ENCODE measurements at regions of chr17 and their contacts with region 1.

Region 1: DNA sequence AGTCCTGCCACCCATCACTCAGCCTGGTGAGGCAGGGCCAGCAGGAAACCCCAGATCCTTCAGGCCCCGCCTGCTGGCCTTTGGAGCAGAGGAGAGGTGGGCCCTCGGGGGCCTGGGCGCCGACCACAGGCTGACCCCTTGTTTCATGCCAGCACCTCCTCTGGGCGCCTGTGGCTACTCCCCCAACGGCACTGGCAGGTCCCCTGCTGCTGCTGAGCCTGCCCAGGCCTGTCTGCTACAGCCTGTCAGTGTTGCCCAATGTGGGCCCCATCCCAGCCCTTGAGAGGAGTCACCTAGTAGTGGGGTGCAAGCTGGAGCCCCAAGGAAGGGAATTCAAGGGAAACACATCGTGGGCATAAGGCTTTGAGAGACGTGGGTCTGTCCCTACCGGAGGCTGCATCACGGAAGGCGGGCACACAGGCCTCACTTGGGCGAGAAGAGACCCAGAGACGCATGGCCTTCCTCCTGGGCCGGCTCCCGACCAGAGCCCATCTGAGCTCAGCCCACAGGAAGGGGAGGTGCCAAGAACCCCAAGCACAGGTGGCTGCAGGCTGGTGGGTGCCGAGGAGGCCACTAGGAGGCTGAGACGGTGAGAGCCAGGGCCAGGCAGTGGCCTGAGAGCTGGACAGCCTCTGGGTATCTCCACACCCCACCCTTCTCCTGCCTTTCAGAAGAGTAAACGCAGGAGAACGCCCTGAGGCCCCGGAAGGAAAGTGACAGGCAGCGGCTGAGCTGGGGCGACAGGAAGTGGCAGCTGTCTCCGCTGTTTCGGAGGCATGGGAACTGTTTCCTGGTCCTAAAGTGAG is 8.0 kb upstream of the FASN start:
- DNase-seq: peak; percentile 54
- H3K4me3 Mint-ChIP-seq: peak overlapping the region; percentile 88
- H3K27ac Mint-ChIP-seq: peak overlapping the region; percentile 96
- H3K4me1 Mint-ChIP-seq: peaks cover 11% of the 10 kb centered on the region
- H3K27me3 Mint-ChIP-seq: no peaks in the 10 kb centered on the region

Region 2: DNA sequence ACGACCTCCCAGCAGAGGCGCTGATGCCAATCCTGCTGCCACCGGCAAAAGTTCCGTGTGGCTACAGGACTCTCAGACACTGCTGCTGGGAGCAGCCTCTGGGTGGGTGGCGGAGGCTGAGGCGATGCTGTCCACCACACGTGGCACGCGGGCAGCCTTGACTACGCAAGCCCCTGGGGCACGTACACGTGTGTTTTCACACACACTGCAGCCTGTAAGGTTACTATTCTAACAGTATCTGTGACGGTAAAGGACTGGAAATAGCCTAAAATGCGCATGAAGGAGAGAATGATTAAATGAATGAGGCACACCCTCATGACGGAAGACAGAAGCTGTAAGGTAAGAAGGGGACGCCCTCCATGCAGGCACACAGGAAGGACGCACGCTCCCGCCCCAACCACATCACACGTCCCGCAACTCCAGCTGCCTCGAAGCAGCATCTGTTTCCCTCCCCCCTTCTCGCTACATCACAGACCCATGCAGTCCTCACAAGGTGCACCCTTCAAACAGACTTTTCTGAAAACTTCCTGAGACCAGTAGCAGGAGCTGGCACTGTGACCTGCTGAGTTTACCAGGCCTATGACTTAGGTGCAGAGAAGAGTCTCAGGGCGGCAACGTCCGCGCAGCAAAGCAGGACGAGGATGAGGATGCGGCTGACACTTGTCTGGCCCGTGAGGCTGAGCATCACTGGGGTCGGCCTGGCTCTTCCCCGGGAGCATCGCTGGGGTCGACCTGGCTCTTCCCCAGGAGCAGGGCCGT is 20.6 kb after region 1 on chr17:
- intact Hi-C with region 1: loop called (anchors 2 kb)
- DNase-seq: peak; percentile 73
- H3K4me3 Mint-ChIP-seq: peak overlapping the region; percentile 82
- H3K27ac Mint-ChIP-seq: peak overlapping the region; percentile 86
- H3K4me1 Mint-ChIP-seq: peaks cover 34% of the 10 kb centered on the region
- H3K27me3 Mint-ChIP-seq: no peaks in the 10 kb centered on the region